ENCODE measurements at regions of chr6 and their contacts with region 1.

Region 1: GRCh38 chr6:7107578-7108195 is at the start of gene RREB1:
- DNase-seq: no peak
- ATAC-seq: peak; percentile 51
- H3K4me3 Mint-ChIP-seq: peak within 1 kb of the TSS; percentile 93
- H3K27ac Mint-ChIP-seq: peak within 1 kb of the TSS; percentile 97
- H3K4me1 Mint-ChIP-seq: peaks cover 36% of the 10 kb centered on the region
- H3K27me3 Mint-ChIP-seq: no peaks in the 10 kb centered on the region
- total RNA-seq, gene RREB1: 37.0 to 39.1 TPM

Region 2: DNA sequence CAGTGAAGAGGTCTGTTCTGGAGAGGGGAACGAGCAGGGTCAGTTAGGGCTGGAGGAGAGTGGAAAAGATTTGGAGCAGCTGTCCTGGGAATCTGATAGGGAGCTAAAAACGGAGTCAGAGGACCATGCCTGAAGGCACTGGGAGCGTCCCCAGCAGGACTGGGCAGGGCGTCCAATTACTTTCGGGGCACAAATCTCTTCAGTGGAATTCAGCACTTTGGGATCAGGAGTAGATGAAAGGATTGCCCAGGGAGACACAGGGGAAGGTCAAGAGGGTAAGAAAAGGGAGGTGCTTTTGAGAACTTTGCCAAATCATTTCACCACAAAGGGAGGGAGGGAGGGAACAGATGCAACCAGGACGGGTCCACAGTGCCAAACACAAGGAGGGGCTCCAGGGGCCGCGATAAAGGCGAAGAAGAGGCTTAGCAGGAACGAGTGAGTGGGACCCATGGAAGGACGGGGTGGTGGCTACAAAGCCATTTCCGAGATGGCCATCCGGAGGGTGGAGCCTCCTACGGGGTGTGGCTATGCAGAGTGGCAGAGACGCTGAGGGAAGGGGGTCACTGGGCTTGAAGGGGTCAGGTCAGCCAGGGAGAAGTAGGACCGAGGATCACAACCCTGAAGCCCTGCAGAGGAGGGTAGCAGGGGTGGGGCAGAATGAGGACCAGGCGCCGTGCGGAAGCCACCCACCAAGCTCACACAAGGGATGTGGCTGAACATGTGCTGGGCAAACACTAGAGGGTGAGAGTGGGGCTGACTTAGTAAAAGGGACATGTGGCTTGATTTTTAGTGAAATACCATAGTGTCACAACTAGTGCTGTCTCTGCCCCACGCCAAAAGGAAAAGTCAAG is 179.9 kb before region 1 on chr6:
- POLR2A ChIA-PET with region 1: no interaction called
- DNase-seq: no peak
- ATAC-seq: peak; percentile 39
- H3K4me3 Mint-ChIP-seq: no peak overlapping the region
- H3K27ac Mint-ChIP-seq: no peak overlapping the region
- H3K4me1 Mint-ChIP-seq: no peaks in the 10 kb centered on the region
- H3K27me3 Mint-ChIP-seq: peaks cover 15% of the 10 kb centered on the region

Region 3: DNA sequence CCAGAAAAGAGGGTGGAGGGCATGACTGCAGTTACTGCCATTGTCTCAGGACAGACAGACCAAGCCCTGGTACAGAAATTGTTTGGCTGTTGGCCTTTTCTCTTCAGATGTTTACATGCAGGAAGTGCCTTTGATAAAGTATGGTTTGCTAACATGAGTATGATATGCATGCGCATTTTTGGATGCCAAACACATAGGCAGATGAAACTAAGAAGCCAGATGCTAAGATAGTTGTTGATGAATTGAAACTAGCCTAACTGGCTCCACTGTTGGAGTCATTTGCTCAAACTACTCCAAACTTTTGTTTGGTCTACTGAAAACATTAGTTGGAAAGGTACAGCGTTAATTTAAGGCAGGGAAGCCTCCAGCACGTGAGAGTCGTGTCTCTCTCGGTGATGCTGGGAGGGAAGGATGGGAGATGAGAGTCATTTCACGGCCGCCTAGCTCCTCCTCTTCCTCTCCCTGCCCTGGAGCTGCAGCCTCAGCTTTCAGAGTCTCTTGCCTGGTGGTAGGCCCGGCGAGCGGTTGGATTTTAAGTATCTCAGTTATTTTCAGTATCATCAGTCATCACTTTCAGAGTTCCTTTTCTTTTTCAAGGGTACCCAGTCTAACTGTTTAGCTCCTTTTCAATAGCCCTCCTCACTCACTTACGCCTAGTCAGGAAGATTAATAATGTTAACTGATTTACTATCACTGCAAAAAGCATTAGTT is 29.8 kb after region 1 on chr6:
- POLR2A ChIA-PET with region 1: interaction called, 15 read pairs
- DNase-seq: peak; percentile 58
- ATAC-seq: peak; percentile 75
- H3K4me3 Mint-ChIP-seq: peak overlapping the region; percentile 77
- H3K27ac Mint-ChIP-seq: peak overlapping the region; percentile 85
- H3K4me1 Mint-ChIP-seq: peaks cover 58% of the 10 kb centered on the region
- H3K27me3 Mint-ChIP-seq: no peaks in the 10 kb centered on the region

Region 4: GRCh38 chr6:7159790-7160525 is 52.3 kb after region 1 on chr6:
- POLR2A ChIA-PET with region 1: no interaction called
- DNase-seq: no peak
- ATAC-seq: no peak
- H3K4me3 Mint-ChIP-seq: no peak overlapping the region
- H3K27ac Mint-ChIP-seq: no peak overlapping the region
- H3K4me1 Mint-ChIP-seq: peaks cover 27% of the 10 kb centered on the region
- H3K27me3 Mint-ChIP-seq: no peaks in the 10 kb centered on the region

Region 5: GRCh38 chr6:7172649-7173048 is 65.0 kb after region 1 on chr6:
- POLR2A ChIA-PET with region 1: no interaction called
- DNase-seq: no peak
- ATAC-seq: no peak
- H3K4me3 Mint-ChIP-seq: no peak overlapping the region
- H3K27ac Mint-ChIP-seq: no peak overlapping the region
- H3K4me1 Mint-ChIP-seq: peaks cover 4% of the 10 kb centered on the region
- H3K27me3 Mint-ChIP-seq: no peaks in the 10 kb centered on the region

Measured in activated naive CD8-positive, alpha-beta T cell treated with anti-CD3 and anti-CD28 coated beads, Interleukin-2, amount 10 ng/mL, durations not matched to agents 7 days and 5 days (primary cell).